Posterior cingulate gyrus (tissue), 11 donors: ENCODE measurements at regions of chrX and their contacts with region 1.

Region 1: DNA sequence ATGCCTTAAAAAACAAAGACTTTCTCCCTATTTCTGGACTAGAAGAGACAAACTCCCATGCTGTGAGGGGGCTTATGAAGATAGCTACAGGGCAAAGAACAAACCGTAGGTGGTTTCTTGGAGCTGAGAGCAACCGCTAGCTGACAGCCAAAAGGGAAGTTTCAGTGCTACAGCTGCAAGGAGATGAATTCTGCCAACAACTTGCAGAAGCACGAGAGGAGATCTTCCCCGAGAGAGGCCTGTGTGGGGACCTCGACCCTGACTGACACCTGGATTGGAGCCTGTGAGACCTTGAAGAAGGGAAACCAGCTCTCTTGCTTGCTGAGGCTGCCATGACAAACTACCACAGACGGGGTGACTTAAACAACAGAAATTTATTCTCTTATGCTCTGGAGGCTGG is 183.8 kb upstream of the VCX3A start:
- DNase-seq: no peak

Region 2: DNA sequence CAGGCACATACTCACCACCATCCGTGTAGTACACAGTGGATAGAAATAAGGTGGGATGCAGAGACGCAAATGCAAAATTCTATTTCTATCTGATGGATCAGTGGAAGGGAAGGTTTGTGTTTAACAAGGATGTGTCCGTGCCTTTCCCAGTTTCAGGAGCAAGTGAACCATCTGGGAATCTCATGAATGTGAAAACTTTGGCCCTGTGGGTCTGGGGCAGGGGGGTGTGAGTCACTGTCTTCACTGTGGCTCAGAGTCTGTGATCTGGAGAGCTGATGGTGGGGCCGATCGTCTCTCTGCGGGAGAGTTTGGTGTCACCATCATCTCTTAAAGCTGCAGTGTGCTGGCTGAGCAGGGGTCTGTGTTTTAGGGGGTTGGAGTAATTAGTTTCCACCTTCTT is 249.5 kb after region 1 on chrX:
- intact Hi-C with region 1: loop called (anchors 10 kb)
- DNase-seq: no peak